Right ventricle myocardium inferior (tissue), 1 donor: ENCODE measurements at regions of chr2 and their contacts with region 1.

Region 1: GRCh38 chr2:205680067-205680466 is 2.2 kb upstream of the NRP2 start:
- DNase-seq: no peak
- ATAC-seq: peak; percentile 20

Region 2: GRCh38 chr2:204260162-204260877 is 1419.7 kb before region 1 on chr2:
- intact Hi-C with region 1: loop called (anchors 10 kb)
- DNase-seq: no peak
- ATAC-seq: peak; percentile 64

Region 3: DNA sequence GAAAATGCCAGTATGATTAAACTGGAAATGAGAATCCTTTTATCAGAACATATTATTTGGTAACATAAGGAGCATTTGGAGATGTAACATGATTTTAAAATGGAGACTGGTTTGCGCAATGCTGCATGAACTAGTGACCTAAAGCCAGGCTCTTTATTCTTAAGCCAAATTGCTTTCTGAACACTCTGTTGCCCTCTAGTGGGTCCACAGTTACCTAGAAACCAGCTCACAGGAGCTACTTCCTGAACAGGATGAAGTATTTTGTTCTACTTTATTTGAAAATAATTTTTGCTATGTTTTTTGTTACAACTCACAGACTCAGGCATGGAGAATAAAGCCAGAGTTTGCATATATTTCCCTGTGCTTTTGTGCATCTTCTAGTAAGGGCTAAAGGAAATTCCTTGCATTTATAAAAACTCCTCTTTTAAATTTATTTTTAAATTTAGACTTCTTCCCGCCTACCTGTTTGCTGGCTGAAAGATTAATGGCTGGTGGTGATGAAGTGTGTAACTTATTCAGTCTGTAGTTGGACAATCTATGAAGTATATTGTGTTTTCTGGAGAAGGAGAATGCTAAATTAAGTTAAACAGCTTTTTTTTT is 988.1 kb before region 1 on chr2:
- intact Hi-C with region 1: loop called (anchors 10 kb)
- DNase-seq: no peak
- ATAC-seq: peak; percentile 70

Region 4: DNA sequence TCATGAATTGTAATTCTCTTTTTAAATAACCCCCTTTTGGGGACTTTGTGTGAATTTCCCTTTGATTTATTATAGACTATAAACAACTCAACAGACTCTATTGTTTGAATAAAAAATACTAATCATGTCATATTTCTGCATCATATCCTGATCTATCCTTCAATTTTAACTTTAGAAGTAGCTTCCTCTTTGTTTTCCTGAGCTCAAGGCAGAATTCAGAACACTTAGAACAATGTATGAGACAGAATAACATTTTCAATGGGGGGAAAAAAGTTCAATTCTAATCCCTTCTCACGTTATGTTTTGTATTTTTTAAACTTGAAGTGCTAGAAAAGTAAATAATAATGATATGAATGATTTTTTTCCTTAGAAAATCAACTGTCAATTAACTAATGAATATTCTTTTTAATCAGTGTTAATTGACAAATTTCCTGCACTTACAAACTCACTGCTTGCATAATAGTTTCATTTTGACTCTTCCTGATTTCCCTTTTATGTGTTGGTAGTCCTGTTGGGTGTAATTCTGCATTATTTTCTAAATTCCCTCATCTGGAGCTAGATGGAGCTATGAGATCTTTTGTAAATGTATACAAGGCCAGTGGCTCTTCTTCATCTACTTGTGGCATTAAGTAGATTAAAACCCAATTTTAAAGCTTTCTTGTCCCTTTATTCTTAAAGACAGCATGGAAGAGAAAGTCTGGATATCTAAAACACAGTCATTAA is 808.7 kb before region 1 on chr2:
- intact Hi-C with region 1: loop called (anchors 10 kb)
- DNase-seq: no peak
- ATAC-seq: peak; percentile 46